ENCODE measurements at regions of chr16 and their contacts with region 1.

Region 1: DNA sequence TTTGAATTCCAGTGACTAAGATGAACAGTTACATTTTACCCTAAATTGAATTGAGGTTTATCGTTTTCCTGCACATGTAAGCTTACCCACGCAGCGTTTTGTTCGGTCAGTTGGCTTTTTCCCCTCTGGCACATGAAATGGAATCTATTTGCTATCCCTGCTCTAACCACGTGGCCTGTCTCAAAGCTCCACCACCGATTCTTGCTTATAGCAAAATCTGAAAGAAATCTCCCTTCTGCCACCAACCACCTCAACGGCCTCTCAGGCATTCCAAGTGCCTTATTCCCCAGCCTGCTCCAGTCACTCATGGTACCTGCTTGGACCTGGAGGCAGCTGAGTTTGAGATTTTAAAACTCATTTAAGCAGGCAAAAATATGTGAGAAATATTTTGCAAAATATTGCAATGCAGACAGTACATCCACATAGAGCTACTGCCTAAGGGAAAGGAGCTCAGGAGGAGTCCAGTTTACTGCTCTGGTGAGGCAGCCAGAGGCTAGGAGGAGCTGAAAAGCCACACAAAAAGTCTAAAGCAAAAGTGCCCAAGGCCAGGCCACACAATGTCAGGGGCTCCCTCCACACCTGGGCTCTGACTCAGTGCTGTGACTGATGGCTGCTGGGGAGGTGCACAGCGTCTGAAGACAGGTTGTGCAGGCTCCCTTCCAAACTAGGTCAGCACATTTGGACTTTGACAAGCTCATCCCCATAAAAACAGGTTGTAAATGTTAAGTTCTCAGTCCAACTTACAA is 26.4 kb downstream of the ARHGAP17 start:
- DNase-seq: peak; percentile 82 to 91
- H3K4me3 ChIP-seq: peak overlapping the region; percentile 36; the same call in 1 of the 2 replicates
- H3K27ac ChIP-seq: peak overlapping the region; percentile 63; the same call in 1 of the 2 replicates
- H3K4me1 ChIP-seq: peaks cover 48% of the 10 kb centered on the region
- H3K27me3 ChIP-seq: no peaks in the 10 kb centered on the region
- CTCF ChIP-seq: no peak

Region 2: GRCh38 chr16:24844101-24845030 is 144.4 kb before region 1 on chr16:
- CTCF ChIA-PET with region 1: no interaction called
- POLR2A ChIA-PET with region 1: no interaction called
- intact Hi-C with region 1: loop called (anchors 10 kb)
- DNase-seq: peak; percentile 86 to 92
- H3K4me3 ChIP-seq: no peak overlapping the region
- H3K27ac ChIP-seq: peak overlapping the region; percentile 80
- H3K4me1 ChIP-seq: peaks cover 34% of the 10 kb centered on the region
- H3K27me3 ChIP-seq: no peaks in the 10 kb centered on the region
- CTCF ChIP-seq: no peak

Region 3: DNA sequence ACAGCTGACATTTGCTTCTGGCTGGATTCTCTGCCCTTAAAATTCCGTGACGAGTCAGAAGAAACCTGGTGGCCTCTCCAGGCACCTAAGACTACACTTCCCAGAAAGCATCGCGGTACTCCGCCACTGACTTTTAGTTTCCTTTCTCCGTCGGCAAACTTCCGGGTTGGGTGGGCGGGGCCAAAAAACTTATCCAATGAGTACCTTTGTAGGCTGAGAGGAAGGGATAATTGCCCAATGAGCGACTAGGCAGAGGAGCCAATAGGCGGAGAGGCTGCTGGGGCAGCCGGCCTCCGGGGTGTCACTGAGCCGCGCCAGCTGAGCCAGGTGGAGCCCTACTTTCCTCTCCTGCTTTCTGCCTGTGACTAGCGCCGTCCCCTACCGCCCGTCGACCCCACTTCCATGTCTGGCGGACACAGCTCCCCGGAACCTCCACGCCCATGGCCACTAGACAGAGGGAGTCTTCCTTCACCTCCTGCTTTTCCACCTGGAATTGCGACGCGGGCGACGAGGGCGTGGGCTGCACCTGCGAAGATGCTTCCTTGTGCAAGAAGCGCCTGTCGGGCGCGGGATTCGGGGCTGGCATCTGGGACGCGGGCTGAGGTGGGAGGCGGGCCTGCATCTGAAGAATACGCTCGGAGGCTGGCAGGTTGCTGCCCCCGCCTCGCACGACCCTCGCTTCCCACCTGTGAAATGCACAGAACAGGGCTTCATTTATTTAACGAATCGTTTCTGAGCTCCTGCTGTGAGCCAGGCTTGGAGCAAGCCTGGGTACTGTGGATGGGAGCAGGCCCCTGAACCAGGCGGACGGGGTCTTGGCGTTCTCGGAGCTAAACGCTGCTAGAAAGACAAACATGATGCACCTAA is 42.9 kb after region 1 on chr16:
- CTCF ChIA-PET with region 1: no interaction called
- POLR2A ChIA-PET with region 1: no interaction called
- intact Hi-C with region 1: loop called (anchors 1 kb)
- DNase-seq: peak; percentile 91 to 93
- H3K4me3 ChIP-seq: peak overlapping the region; percentile 92
- H3K27ac ChIP-seq: no peak overlapping the region
- H3K4me1 ChIP-seq: peaks cover 13% of the 10 kb centered on the region
- H3K27me3 ChIP-seq: no peaks in the 10 kb centered on the region
- CTCF ChIP-seq: no peak

Region 4: DNA sequence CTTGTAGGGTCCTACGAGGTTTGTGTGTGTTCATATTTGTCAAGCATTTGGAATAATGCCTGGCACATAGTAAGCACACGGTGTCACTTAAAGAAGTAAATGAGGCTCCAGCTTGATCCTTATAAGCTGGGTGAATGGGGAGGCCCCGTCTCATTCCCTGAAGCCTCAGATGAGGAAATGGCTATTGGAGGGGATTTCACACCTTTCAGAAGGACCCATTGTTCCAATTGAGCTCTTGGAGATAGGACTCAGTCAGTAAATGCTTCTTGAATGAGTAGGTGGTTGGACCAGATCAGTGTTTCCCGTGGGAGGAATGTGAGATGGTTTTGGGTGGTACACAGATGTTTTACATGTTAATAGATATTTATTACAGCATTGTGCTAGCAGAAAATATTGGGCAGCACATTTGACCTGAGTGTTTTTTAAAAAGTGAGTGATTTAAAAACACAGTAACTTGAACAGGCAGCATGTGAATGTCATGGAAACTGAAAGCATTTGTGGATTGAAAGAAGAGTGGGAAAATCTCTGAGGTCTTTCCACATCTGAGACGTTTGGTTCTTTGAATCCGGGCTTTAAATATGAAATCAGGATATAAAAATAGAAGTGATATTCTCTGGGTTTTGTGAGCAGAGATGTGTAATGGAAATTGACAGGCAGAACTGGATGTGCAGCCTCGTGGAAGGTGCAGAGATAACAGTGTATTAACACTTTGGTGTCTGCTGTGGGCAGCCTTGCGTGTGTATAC is 62.8 kb after region 1 on chr16:
- CTCF ChIA-PET with region 1: interaction called, 7 read pairs
- POLR2A ChIA-PET with region 1: interaction called, 18 read pairs
- intact Hi-C with region 1: loop called (anchors 2 kb)
- DNase-seq: peak; percentile 23 to 69
- H3K4me3 ChIP-seq: no peak overlapping the region
- H3K27ac ChIP-seq: no peak overlapping the region
- H3K4me1 ChIP-seq: peaks cover 38% of the 10 kb centered on the region
- H3K27me3 ChIP-seq: no peaks in the 10 kb centered on the region
- CTCF ChIP-seq: no peak

Measured in PC-9 (cell line).